ENCODE measurements at regions of chr10 and their contacts with region 1.

Region 1: GRCh38 chr10:110363572-110364411 is 59.1 kb upstream of the SMNDC1 start:
- DNase-seq: no peak
- H3K4me3 Mint-ChIP-seq: peak overlapping the region; percentile 34
- H3K27ac Mint-ChIP-seq: peak overlapping the region; percentile 83
- H3K4me1 Mint-ChIP-seq: peaks cover 84% of the 10 kb centered on the region
- H3K27me3 Mint-ChIP-seq: no peaks in the 10 kb centered on the region

Region 2: GRCh38 chr10:110387983-110388687 is 24.3 kb after region 1 on chr10:
- intact Hi-C with region 1: loop called (anchors 1 kb)
- DNase-seq: no peak
- H3K4me3 Mint-ChIP-seq: peak overlapping the region; percentile 49
- H3K27ac Mint-ChIP-seq: peak overlapping the region; percentile 96
- H3K4me1 Mint-ChIP-seq: peaks cover 59% of the 10 kb centered on the region
- H3K27me3 Mint-ChIP-seq: no peaks in the 10 kb centered on the region

Region 3: GRCh38 chr10:110395725-110396651 is 32.2 kb after region 1 on chr10:
- intact Hi-C with region 1: loop called (anchors 1 kb)
- DNase-seq: peak; percentile 67
- H3K4me3 Mint-ChIP-seq: peak overlapping the region; percentile 15
- H3K27ac Mint-ChIP-seq: peak overlapping the region; percentile 77
- H3K4me1 Mint-ChIP-seq: peaks cover 75% of the 10 kb centered on the region
- H3K27me3 Mint-ChIP-seq: no peaks in the 10 kb centered on the region